ENCODE measurements at regions of chr11 and their contacts with region 1.

Region 1: DNA sequence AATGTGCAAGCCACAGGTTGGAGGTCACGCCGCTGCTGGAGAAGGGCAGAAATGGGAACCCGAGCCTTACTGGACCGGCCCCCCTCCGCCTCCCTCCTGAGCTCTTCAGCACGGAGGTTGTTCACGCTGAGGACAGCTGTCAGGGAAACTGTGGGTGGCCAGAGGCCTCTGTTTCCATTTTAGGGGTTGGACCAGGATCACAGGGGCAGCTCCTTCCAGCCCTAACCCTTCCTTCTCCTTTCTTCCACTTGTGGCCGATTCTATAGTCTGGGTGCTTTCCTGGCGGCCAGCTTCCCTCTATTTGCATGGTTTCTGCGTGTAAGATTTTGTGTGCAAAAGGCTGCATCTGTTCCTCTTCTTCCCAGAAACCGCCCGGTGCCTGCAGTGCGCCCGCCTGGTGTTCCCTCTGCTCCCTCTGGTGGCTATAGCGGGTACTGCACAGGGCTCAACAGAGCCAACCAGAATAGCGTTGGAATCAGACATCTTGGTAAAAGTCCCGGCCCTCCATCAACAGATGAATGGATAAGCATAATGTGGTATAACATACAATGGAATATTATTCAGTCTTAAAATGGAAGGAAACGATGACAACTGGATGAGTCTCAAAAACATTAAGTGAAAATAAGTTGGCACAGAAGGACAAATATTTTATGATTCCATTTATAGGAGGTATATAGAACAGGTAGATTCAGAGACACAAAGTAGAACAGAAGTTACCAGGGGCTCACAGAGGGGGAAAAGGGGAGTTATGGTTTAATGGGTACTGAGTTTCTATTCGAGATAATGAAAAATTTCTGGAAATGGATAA is 8.4 kb upstream of the SLC22A8 start:
- DNase-seq: peak; percentile 92
- ATAC-seq: peak; percentile 96
- H3K4me3 Mint-ChIP-seq: no peak overlapping the region
- H3K27ac Mint-ChIP-seq: no peak overlapping the region
- H3K4me1 Mint-ChIP-seq: peaks cover 2% of the 10 kb centered on the region
- H3K27me3 Mint-ChIP-seq: peaks cover 12% of the 10 kb centered on the region
- CTCF ChIP-seq: peak; percentile 100

Region 2: GRCh38 chr11:62974848-62975522 is 49.1 kb before region 1 on chr11:
- CTCF ChIA-PET with region 1: interaction called, 18 read pairs
- POLR2A ChIA-PET with region 1: no interaction called
- intact Hi-C with region 1: no loop called
- DNase-seq: peak; percentile 49
- ATAC-seq: peak; percentile 79
- H3K4me3 Mint-ChIP-seq: no peak overlapping the region
- H3K27ac Mint-ChIP-seq: no peak overlapping the region
- H3K4me1 Mint-ChIP-seq: no peaks in the 10 kb centered on the region
- H3K27me3 Mint-ChIP-seq: peaks cover 16% of the 10 kb centered on the region
- CTCF ChIP-seq: peak; percentile 55

Region 3: GRCh38 chr11:63369165-63369970 is 345.3 kb after region 1 on chr11 and contains the start of gene SLC22A9:
- CTCF ChIA-PET with region 1: no interaction called
- POLR2A ChIA-PET with region 1: no interaction called
- intact Hi-C with region 1: no loop called
- DNase-seq: no peak
- ATAC-seq: no peak
- H3K4me3 Mint-ChIP-seq: no peak within 1 kb of the TSS
- H3K27ac Mint-ChIP-seq: no peak within 1 kb of the TSS
- H3K4me1 Mint-ChIP-seq: no peaks in the 10 kb centered on the region
- H3K27me3 Mint-ChIP-seq: peaks cover 33% of the 10 kb centered on the region
- CTCF ChIP-seq: no peak
- total RNA-seq, gene SLC22A9: not detected